Posterior vena cava (tissue), 2 donors: ENCODE measurements at regions of chr13 and their contacts with region 1.

Region 1: DNA sequence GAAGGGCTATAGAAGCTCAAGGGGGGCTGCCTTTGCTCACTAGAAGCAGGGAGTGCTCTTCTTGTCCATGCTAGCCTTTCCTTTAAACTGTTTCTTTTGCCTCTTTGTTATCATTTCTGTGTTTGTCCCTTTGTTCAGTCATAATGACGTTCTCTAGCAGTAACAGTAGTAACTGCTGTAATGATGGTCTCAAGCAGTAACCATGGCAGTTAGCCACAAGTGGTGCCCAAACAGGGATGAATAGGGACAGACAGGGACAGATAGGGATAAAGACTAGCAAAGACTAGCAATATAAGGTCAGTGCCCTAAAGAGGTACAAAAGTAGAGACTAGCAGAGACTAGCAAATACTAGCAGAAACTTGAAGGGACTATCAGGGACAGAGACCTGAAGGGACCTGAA is 869.0 kb upstream of the PRR20A start:
- DNase-seq: no peak

Region 2: DNA sequence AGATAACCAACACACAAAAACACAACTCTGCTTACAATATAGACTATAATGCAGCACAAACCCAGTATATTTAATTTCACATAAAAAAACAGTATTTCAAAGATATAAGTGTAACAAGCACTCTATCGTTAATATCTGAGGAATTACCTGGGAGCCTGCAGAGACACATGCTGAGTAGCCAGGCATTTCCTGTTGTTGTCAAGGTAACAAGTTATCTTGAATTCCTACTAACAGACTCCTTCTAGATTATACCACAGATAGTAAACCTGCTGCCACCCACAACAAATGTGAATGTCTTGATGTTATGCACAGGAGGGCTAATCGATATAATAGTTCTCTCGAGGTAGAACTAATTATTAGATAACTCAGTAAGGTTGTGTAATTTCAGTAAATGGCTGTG is 43.1 kb after region 1 on chr13:
- intact Hi-C with region 1: loop called in 1 of 2 experiments (anchors 2 kb)
- DNase-seq: no peak

Region 3: GRCh38 chr13:57286511-57287098 is 1014.9 kb after region 1 on chr13:
- intact Hi-C with region 1: loop called in 1 of 2 experiments (anchors 5 kb)
- DNase-seq: peak; percentile 77

Region 4: GRCh38 chr13:57409656-57410055 is 1138.0 kb after region 1 on chr13:
- intact Hi-C with region 1: loop called in 1 of 2 experiments (anchors 5 kb)
- DNase-seq: peak; percentile 34